ENCODE measurements at regions of chr7 and their contacts with region 1.

Region 1: GRCh38 chr7:151631968-151632749 is 112.5 kb upstream of the RHEB start:
- DNase-seq: peak; percentile 68 to 97
- H3K4me3 ChIP-seq: peak overlapping the region; percentile 73
- H3K27ac ChIP-seq: peak overlapping the region; percentile 75
- H3K4me1 ChIP-seq: peaks cover 24% of the 10 kb centered on the region
- H3K27me3 ChIP-seq: no peaks in the 10 kb centered on the region
- CTCF ChIP-seq: no peak

Region 2: DNA sequence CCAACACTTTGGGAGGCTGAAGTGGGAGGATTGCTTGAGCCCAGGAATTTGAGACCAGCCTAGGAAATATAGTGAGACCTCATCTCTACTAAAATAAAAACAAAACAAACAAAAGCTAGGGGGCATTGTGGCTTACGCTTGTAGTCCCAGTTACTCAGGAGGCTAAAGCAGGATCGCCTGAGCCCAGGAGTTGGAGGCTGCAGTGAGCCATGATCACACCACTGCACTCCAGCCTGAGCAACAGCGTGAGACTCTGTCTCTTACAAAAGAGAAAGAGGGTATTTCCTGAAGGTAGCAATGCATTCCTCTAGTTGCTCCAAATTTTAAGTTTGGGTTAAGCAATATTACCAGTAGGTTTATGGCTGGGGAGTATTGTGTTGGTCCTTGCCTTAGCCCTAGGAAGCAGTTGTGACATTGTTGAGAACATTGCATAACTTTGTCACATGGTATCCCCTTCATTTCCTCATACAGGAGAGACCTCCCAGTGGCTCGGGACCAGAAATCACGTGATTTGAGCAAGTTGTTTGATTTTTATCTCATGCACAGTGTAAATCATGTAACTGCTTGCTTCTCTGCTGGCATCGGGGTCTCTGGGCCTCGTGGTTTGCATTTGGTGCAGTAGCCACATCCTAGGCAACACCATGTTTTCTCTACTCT is 360.3 kb before region 1 on chr7:
- CTCF ChIA-PET with region 1: no interaction called
- POLR2A ChIA-PET with region 1: no interaction called
- intact Hi-C with region 1: no loop called
- DNase-seq: peak in 1 of 2 experiments; percentile 64
- H3K4me3 ChIP-seq: no peak overlapping the region
- H3K27ac ChIP-seq: no peak overlapping the region
- H3K4me1 ChIP-seq: 0 out of 2 replicates have a peak, but pooled peaks cover 4% of the 10 kb centered on the region
- H3K27me3 ChIP-seq: peaks cover 43% of the 10 kb centered on the region
- CTCF ChIP-seq: no peak

Region 3: DNA sequence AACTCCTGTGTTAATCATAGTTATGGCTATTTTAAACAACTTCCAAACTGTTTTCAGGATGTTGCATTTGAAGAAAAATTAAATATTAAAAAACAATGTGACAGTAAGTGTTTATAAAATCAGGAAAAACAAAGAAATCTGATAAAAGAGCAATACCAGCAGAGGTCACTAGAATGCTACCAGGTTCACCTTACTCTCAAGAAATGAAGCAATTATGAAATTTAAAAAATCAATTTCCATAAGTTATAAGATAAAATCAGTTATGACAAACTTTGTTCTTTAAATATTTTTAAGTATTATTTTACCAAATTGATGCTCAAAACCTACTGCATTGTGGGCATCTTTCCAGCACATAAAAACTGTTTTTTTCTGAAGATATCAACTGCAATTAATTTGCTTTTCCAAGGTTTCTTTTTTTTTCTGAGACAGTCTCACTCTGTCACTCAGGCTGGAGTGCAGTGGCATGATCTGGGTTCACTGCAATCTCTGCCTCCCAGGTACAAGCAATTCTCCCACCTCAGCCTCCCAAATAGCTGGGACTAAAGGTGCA is 61.7 kb before region 1 on chr7:
- CTCF ChIA-PET with region 1: interaction called, 3 read pairs
- POLR2A ChIA-PET with region 1: no interaction called
- intact Hi-C with region 1: loop called (anchors 1 kb)
- DNase-seq: no peak
- H3K4me3 ChIP-seq: no peak overlapping the region
- H3K27ac ChIP-seq: no peak overlapping the region
- H3K4me1 ChIP-seq: no peaks in the 10 kb centered on the region
- H3K27me3 ChIP-seq: no peaks in the 10 kb centered on the region
- CTCF ChIP-seq: peak; percentile 86

Region 4: GRCh38 chr7:151677581-151678235 is 45.5 kb after region 1 on chr7:
- CTCF ChIA-PET with region 1: no interaction called
- POLR2A ChIA-PET with region 1: no interaction called
- intact Hi-C with region 1: loop called (anchors 2 kb)
- DNase-seq: peak in 1 of 2 experiments; percentile 22
- H3K4me3 ChIP-seq: no peak overlapping the region
- H3K27ac ChIP-seq: peak overlapping the region; percentile 83
- H3K4me1 ChIP-seq: peaks cover 20% of the 10 kb centered on the region
- H3K27me3 ChIP-seq: no peaks in the 10 kb centered on the region
- CTCF ChIP-seq: no peak

Region 5: DNA sequence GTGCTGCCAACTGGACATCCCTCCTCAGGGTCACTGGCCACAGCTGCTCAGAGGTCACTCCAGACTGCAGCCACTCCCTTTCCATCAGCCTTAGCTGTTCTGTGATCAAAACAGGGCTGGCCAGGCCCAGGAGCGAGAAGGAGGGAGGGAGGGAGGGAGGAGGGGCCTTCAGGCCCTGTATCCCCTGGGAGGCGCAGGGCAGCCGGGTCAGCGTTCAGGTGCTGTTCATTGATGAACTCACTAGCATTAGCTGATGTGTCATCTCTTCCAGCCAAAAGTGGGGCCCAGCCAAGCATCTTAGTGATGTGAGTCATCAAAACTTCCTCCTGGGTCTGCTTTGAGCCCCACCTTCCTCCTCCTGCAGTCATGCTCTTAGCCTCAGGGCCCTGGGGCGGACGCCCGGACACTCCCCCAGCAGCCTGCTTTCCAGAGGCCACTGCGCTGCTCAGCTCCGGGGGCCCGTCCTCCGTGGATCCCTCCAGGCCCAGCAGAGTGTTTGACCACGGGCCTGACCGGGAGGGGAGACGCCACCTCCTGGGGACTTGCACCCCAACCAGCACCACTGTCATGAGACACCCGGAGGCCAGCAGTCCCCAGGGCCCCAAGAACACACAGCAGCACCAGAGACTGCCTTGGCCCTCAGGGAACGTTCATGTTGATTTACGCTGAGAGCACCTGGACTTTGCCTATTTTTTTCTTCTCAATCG is 95.6 kb after region 1 on chr7:
- CTCF ChIA-PET with region 1: interaction called, 3 read pairs
- POLR2A ChIA-PET with region 1: interaction called, 8 read pairs
- intact Hi-C with region 1: loop called (anchors 1 kb)
- DNase-seq: peak; percentile 97 to 100
- H3K4me3 ChIP-seq: peak overlapping the region; percentile 39; the same call in 1 of the 2 replicates
- H3K27ac ChIP-seq: peak overlapping the region; percentile 56
- H3K4me1 ChIP-seq: peaks cover 26% of the 10 kb centered on the region
- H3K27me3 ChIP-seq: no peaks in the 10 kb centered on the region
- CTCF ChIP-seq: no peak

Region 6: DNA sequence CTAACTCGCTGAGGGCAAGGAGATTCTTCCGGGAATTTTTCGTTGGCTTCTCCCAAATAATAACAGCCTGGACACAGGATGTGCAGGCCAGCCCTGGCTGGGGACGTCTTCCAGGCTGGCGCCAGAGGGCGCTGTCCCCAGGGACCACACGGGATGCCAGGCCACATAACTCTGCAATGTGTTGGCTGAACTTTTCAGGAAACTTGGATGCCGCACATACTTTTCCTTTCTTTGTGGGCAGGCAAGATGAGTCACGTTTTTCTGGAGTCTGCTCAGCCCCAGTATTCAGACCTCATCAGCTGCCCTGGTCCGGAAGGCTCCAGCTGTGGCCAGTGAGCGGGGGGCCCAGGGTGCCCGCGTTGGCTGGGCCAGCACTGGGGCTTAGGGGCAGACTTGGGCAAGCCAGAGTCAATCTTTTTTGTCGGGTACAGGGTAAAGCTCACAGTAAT is 122.0 kb after region 1 on chr7:
- CTCF ChIA-PET with region 1: interaction called, 7 read pairs
- POLR2A ChIA-PET with region 1: no interaction called
- intact Hi-C with region 1: loop called (anchors 2 kb)
- DNase-seq: peak; percentile 93 to 97
- H3K4me3 ChIP-seq: no peak overlapping the region
- H3K27ac ChIP-seq: no peak overlapping the region
- H3K4me1 ChIP-seq: peaks cover 15% of the 10 kb centered on the region
- H3K27me3 ChIP-seq: no peaks in the 10 kb centered on the region
- CTCF ChIP-seq: peak; percentile 99

Measured in PC-9 (cell line).